ENCODE measurements at regions of chr3 and their contacts with region 1.

Region 1: GRCh38 chr3:10581251-10581650 is 75.9 kb upstream of the ATP2B2 start:
- DNase-seq: no peak
- ATAC-seq: no peak
- H3K4me3 ChIP-seq: no peak overlapping the region
- H3K4me3 Mint-ChIP-seq: no peak overlapping the region
- H3K27ac ChIP-seq: no peak overlapping the region
- H3K27ac Mint-ChIP-seq: no peak overlapping the region
- H3K4me1 ChIP-seq: no peaks in the 10 kb centered on the region
- H3K4me1 Mint-ChIP-seq: no peaks in the 10 kb centered on the region
- H3K27me3 ChIP-seq: peaks cover 5% of the 10 kb centered on the region in 2 experiments
- H3K27me3 Mint-ChIP-seq: peaks cover 32% of the 10 kb centered on the region
- CTCF ChIP-seq: no peak

Region 2: GRCh38 chr3:9473496-9474065 is 1107.7 kb before region 1 on chr3:
- CTCF ChIA-PET with region 1: no interaction called
- POLR2A ChIA-PET with region 1: no interaction called
- intact Hi-C with region 1: loop called in 1 of 2 experiments (anchors 5 kb)
- DNase-seq: no peak
- ATAC-seq: no peak
- H3K4me3 ChIP-seq: no peak overlapping the region
- H3K4me3 Mint-ChIP-seq: no peak overlapping the region
- H3K27ac ChIP-seq: no peak overlapping the region
- H3K27ac Mint-ChIP-seq: no peak overlapping the region
- H3K4me1 ChIP-seq: no peaks in the 10 kb centered on the region
- H3K4me1 Mint-ChIP-seq: no peaks in the 10 kb centered on the region
- H3K27me3 ChIP-seq: no peaks in the 10 kb centered on the region
- H3K27me3 Mint-ChIP-seq: no peaks in the 10 kb centered on the region
- CTCF ChIP-seq: no peak

Region 3: GRCh38 chr3:10619989-10620832 is 39.0 kb after region 1 on chr3:
- CTCF ChIA-PET with region 1: no interaction called
- POLR2A ChIA-PET with region 1: no interaction called
- intact Hi-C with region 1: loop called in 1 of 2 experiments (anchors 5 kb)
- DNase-seq: peak in 1 of 14 experiments; percentile 10
- ATAC-seq: no peak
- H3K4me3 ChIP-seq: no peak overlapping the region
- H3K4me3 Mint-ChIP-seq: no peak overlapping the region
- H3K27ac ChIP-seq: no peak overlapping the region
- H3K27ac Mint-ChIP-seq: no peak overlapping the region
- H3K4me1 ChIP-seq: no peaks in the 10 kb centered on the region
- H3K4me1 Mint-ChIP-seq: no peaks in the 10 kb centered on the region
- H3K27me3 ChIP-seq: peaks cover 0 to 5% of the 10 kb centered on the region in 2 experiments
- H3K27me3 Mint-ChIP-seq: peaks cover 19% of the 10 kb centered on the region
- CTCF ChIP-seq: no peak